B cell (primary cell): ENCODE measurements at regions of chr9 and their contacts with region 1.

Region 1: GRCh38 chr9:68762570-68762969 is 57.5 kb downstream of the PIP5K1B start:
- DNase-seq: no peak
- ATAC-seq: no peak
- H3K4me3 ChIP-seq: no peak overlapping the region
- H3K4me3 Mint-ChIP-seq: no peak overlapping the region
- H3K27ac ChIP-seq: peak overlapping the region in 1 of 2 donors; percentile 22
- H3K27ac Mint-ChIP-seq: peak overlapping the region; percentile 35
- H3K4me1 ChIP-seq: peaks cover 12 to 16% of the 10 kb centered on the region in 2 donors
- H3K4me1 Mint-ChIP-seq: peaks cover 24% of the 10 kb centered on the region
- H3K27me3 ChIP-seq: no peaks in the 10 kb centered on the region
- H3K27me3 Mint-ChIP-seq: no peaks in the 10 kb centered on the region
- CTCF ChIP-seq: no peak

Region 2: DNA sequence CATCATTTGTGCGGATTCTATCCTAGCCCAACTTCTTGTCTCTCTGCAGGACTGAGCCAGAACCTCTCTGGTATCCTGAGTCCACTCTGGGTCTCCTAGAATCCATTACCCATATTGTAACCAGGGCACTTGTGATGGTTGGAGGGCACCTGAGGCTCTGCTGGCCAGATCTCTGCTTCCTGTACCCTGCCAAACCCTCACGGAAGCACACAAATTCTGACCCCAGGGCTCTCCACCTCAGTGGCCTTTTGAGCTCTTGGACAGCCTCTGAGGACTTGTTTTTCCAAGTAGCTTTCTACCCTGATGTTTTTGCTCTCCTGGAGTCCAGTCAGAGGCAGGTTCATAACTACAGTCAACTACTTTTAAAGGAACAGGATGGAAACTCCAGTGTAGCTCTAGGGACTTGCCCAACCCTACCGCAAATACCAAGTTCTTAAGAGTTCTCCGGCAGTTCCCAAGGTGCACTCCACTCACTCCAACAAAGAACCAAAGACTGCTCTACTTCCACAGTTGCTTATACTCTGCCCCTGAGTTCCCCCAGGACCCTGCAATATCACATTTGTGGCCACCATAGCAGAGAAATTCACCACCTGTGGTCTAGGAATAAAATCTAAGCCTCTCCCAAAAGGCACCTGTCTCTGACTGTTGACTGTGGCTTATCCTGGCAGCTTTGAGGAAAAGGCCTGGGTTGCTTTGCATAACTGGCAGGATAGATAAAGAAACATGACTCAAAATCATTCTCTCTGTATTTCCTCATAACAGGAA is 48.0 kb before region 1 on chr9:
- CTCF ChIA-PET with region 1: no interaction called
- POLR2A ChIA-PET with region 1: no interaction called
- intact Hi-C with region 1: loop called (anchors 5 kb)
- DNase-seq: no peak
- ATAC-seq: no peak
- H3K4me3 ChIP-seq: no peak overlapping the region
- H3K4me3 Mint-ChIP-seq: no peak overlapping the region
- H3K27ac ChIP-seq: no peak overlapping the region
- H3K27ac Mint-ChIP-seq: no peak overlapping the region
- H3K4me1 ChIP-seq: peaks cover 9 to 23% of the 10 kb centered on the region in 2 donors
- H3K4me1 Mint-ChIP-seq: peaks cover 50% of the 10 kb centered on the region
- H3K27me3 ChIP-seq: no peaks in the 10 kb centered on the region
- H3K27me3 Mint-ChIP-seq: no peaks in the 10 kb centered on the region
- CTCF ChIP-seq: no peak

Region 3: GRCh38 chr9:68822596-68823165 is 60.1 kb after region 1 on chr9:
- CTCF ChIA-PET with region 1: no interaction called
- POLR2A ChIA-PET with region 1: no interaction called
- intact Hi-C with region 1: no loop called
- DNase-seq: no peak
- ATAC-seq: no peak
- H3K4me3 ChIP-seq: no peak overlapping the region
- H3K4me3 Mint-ChIP-seq: no peak overlapping the region
- H3K27ac ChIP-seq: no peak overlapping the region
- H3K27ac Mint-ChIP-seq: no peak overlapping the region
- H3K4me1 ChIP-seq: no peaks in the 10 kb centered on the region
- H3K4me1 Mint-ChIP-seq: no peaks in the 10 kb centered on the region
- H3K27me3 ChIP-seq: no peaks in the 10 kb centered on the region
- H3K27me3 Mint-ChIP-seq: no peaks in the 10 kb centered on the region
- CTCF ChIP-seq: no peak

Region 4: DNA sequence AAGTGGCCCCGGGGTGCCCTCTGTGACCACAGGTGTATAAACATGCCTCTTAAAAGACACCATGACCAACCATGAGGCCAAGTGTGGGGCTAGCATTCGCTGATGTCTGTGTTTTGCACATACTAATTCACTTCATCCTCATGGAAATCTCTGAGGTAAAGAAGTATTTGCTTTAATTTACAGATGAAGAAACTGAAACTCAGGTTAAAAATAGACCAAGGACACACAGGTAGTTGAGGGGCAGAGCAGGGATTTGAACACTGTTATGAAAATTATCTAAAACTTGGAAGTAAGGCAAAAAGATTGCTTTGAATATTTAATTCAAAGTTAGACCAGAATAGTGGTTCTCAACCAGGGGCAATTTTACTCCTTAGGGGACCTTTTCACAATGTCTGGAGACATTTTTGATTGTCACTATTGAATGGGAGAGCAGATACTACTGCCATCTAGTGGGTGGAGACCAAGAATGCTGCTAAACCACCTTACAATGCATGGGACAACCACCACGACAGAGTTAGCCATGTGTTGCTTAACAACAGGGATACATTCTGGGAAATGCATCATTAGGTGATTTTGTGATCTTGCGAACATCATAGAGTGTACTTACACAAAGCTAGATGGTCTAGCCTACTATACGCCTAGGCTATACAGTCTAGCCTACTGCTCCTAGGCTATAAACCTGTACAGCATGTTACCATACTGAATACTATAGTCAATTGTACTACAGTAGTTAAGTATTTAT is 265.0 kb after region 1 on chr9:
- CTCF ChIA-PET with region 1: no interaction called
- POLR2A ChIA-PET with region 1: no interaction called
- intact Hi-C with region 1: no loop called
- DNase-seq: peak; percentile 68
- ATAC-seq: peak; percentile 87
- H3K4me3 ChIP-seq: no peak overlapping the region
- H3K4me3 Mint-ChIP-seq: no peak overlapping the region
- H3K27ac ChIP-seq: no peak overlapping the region
- H3K27ac Mint-ChIP-seq: no peak overlapping the region
- H3K4me1 ChIP-seq: peaks cover 5% of the 10 kb centered on the region in 2 donors
- H3K4me1 Mint-ChIP-seq: peaks cover 7% of the 10 kb centered on the region
- H3K27me3 ChIP-seq: no peaks in the 10 kb centered on the region
- H3K27me3 Mint-ChIP-seq: no peaks in the 10 kb centered on the region
- CTCF ChIP-seq: peak; percentile 89